Spleen (tissue), 13 donors: ENCODE measurements at regions of chr14 and their contacts with region 1.

Region 1: DNA sequence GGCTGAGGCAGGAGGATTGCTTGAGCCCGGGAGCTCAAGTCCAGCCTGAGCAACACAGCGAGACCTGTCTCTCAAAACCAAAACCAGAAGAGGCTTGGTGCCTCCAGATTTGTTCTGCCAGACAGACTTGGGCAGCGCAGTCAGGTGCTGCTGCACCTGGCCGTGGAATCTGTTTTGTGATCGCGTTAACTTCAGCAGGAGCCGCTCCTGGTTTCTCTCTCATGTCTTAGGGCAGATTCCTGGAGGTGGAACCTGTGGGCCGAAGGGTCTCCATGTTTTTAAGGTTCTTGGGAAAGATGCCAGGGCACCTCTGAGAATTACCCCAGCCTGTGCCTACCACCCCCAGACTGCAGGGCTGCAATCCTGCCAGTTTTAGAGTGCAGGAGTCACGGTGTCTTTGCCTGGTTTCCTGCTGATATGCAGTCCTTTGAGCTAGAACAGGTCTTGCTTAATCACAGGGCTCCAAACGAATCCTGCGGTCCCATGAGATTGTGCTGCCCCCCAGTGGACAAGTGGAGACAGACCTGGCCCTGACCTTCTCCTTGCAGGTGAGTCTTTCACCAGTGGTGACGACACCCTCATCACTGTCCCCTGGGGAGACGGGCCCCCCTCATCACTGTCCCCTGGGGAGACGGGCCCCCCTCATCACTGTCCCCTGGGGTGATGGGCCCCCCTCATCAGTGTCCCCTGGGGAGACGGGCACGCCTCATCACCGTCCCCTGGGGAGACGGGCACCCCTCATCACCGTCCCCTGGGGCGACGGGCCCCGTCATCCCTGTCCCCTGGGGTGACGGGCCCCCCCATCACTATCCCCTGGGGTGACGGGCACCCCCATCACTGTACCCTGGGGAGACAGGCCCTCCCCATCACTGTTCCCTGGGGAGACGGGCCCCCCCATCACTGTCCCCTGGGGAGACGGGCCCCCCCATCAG is 37.6 kb downstream of the PACS2 start:
- DNase-seq: peak; percentile 93
- H3K4me3 ChIP-seq: no peak overlapping the region
- H3K27ac ChIP-seq: peak overlapping the region in 4 of 8 donors; percentile 14 to 30 (median 23)
- H3K4me1 ChIP-seq: peaks cover 3 to 22% (median 9%) of the 10 kb centered on the region in 6 donors
- H3K27me3 ChIP-seq: no peaks in the 10 kb centered on the region
- CTCF ChIP-seq: peak; percentile 86 to 94 (median 90)
- POLR2A ChIP-seq: no peak

Region 2: GRCh38 chr14:105090493-105091053 is 261.6 kb before region 1 on chr14:
- intact Hi-C with region 1: loop called (anchors 2 kb)
- DNase-seq: peak; percentile 97
- H3K4me3 ChIP-seq: no peak overlapping the region
- H3K27ac ChIP-seq: peak overlapping the region in 3 of 8 donors; percentile 87 to 91 (median 88)
- H3K4me1 ChIP-seq: peaks cover 21 to 90% (median 66%) of the 10 kb centered on the region in 6 donors
- H3K27me3 ChIP-seq: peaks cover 0 to 58% (median 17%) of the 10 kb centered on the region in 7 donors
- CTCF ChIP-seq: peak; percentile 93 to 99 (median 97)
- POLR2A ChIP-seq: no peak

Region 3: DNA sequence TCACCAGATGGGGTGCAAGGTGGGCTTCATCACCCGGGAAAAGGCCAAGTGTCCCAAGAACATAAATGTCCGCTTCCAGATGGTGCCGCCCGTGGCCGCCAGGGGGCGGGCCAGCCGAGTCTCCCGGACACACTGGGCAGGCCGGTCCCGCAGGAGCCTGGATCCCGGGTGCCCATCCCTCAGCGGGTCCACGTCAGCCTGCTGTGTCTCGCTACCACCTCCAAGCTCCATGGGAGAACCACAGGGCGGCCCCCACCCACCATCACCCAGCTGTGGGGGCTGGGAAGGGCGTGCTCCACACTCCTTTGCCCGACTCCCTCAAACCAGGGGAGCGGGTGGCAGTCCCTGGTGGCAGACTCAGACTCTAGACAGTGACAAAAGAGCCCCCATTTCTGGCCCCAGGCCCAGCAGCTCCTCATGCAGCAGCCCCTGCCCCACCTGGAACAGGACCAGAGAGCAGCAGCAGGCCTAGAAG is 149.1 kb before region 1 on chr14:
- intact Hi-C with region 1: loop called (anchors 5 kb)
- DNase-seq: peak; percentile 91
- H3K4me3 ChIP-seq: no peak overlapping the region
- H3K27ac ChIP-seq: peak overlapping the region in 1 of 8 donors; percentile 16
- H3K4me1 ChIP-seq: peaks cover 20 to 82% (median 50%) of the 10 kb centered on the region in 6 donors
- H3K27me3 ChIP-seq: peaks cover 0 to 67% (median 25%) of the 10 kb centered on the region in 7 donors
- CTCF ChIP-seq: peak; percentile 56 to 96 (median 85)
- POLR2A ChIP-seq: no peak

Region 4: DNA sequence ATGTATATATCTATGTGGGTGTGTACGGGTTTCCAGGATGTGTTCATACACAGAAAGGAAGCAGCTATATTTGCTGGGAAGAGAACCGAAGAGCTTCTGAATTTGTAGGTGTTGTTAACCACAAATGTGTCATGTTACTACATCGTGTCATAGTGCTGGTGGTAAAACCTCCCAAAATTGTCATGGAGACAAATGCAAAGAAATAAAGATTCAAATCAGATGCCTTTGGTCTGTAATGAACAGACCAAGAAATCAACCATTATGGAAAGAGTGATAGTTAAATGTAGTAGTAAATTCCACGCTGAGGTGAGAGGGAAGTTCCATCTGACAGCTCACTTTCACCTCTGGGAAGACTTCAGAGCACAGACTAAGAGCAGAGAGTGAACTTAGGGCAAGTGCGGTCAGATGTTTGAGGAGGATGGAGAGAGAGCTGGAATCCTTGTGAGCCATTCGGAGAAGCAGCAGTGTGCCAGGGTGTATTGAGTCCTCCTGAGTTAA is 661.7 kb after region 1 on chr14:
- intact Hi-C with region 1: no loop called
- DNase-seq: no peak
- H3K4me3 ChIP-seq: no peak overlapping the region
- H3K27ac ChIP-seq: no peak overlapping the region
- H3K4me1 ChIP-seq: no peaks in the 10 kb centered on the region
- H3K27me3 ChIP-seq: no peaks in the 10 kb centered on the region
- CTCF ChIP-seq: no peak
- POLR2A ChIP-seq: no peak